ENCODE measurements at regions of chr3 and their contacts with region 1.

Region 1: DNA sequence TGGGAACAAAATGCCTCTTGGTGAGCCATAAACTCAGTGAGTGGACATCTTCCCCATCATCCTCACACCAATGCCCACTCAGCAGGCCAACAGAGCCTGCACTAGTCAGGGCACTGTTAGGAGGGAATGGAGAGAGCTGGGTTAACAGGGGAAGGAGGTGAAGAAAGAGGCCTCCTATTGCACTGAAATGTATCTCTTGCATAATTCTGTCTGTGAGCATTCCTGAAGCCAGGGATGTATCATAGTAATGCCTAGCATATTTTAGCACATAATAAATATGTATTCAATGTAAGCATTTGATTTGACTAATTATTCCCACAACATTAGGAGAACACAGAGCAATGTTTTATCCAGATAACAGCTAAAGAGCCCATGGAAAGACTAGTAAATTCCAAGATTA is 81.2 kb downstream of the ANO10 start:
- DNase-seq: no peak
- H3K4me3 ChIP-seq: no peak overlapping the region
- H3K27ac ChIP-seq: no peak overlapping the region
- H3K4me1 ChIP-seq: no peaks in the 10 kb centered on the region
- H3K27me3 ChIP-seq: no peaks in the 10 kb centered on the region
- CTCF ChIP-seq: no peak
- POLR2A ChIP-seq: no peak

Region 2: GRCh38 chr3:43455233-43455632 is 85.4 kb before region 1 on chr3:
- intact Hi-C with region 1: no loop called
- DNase-seq: no peak
- H3K4me3 ChIP-seq: no peak overlapping the region
- H3K27ac ChIP-seq: no peak overlapping the region
- H3K4me1 ChIP-seq: no peaks in the 10 kb centered on the region
- H3K27me3 ChIP-seq: no peaks in the 10 kb centered on the region
- CTCF ChIP-seq: no peak
- POLR2A ChIP-seq: no peak

Region 3: GRCh38 chr3:44198284-44199269 is 658.0 kb after region 1 on chr3:
- intact Hi-C with region 1: loop called (anchors 10 kb)
- DNase-seq: peak; percentile 38 to 41
- H3K4me3 ChIP-seq: no peak overlapping the region
- H3K27ac ChIP-seq: no peak overlapping the region
- H3K4me1 ChIP-seq: no peaks in the 10 kb centered on the region
- H3K27me3 ChIP-seq: no peaks in the 10 kb centered on the region
- CTCF ChIP-seq: peak; percentile 54 to 72 (median 62)
- POLR2A ChIP-seq: no peak

Measured in uterus (tissue), 4 donors.